GM10248 (cell line): ENCODE measurements at regions of chr18 and their contacts with region 1.

Region 1: GRCh38 chr18:12934454-12935071 is 13.2 kb upstream of the SEH1L start:
- DNase-seq: peak; percentile 73
- CTCF ChIP-seq: peak; percentile 87

Region 2: DNA sequence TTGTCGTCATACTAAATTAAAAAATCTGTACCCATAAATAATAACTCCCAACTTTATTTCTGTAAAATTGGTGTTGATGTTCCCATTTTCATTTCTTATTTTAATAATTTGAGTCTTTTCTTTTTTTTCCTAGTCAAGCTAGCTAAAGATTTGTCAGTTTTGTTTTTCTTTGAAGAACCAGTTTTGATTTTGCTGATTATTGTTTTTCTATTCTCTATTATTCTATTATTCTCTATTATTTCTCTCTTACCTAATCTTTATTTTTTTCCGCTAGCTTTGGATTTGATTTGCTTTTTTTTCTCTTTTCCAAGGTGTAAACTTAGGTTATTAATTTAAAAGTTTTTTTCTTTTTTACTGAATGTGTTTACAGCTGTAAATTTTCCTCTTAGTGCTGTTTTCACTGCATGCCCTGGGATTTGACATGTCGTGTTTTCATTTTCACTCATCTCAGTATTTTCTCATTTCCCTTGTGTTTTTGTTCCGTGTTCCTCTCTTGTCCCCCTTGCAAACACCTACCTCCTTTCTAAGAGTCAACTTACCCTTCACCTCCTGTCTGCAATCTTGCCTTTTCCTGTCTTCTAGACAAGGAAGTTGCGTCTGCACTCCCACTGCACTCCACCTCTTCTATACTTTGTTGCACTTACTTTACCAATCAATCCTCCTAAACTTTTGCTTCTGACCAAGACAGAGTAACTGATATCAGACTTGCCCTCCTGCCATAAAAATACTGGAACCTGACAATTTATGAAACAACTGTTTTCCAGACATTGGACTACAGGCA is 212.9 kb before region 1 on chr18:
- CTCF ChIA-PET with region 1: interaction called, 100 read pairs
- POLR2A ChIA-PET with region 1: no interaction called
- DNase-seq: no peak
- CTCF ChIP-seq: no peak

Region 3: DNA sequence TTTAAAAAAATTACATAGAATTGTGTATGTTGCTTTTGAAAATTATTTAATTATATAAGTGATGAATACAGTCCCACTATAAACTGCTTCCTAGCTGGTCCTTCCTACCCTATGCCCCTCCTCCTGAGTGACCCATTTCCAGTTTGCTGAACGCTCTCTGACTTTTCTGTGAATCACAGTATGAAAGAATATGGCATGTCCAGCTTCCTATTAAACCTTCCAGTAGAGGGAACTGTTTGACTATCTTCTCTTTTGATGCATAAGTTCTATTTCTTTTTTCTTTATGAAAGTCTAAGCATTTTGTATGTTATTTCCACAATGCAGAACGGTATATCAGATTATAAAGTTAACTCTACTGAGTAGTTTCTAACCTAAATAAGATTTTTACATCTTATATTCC is 190.5 kb before region 1 on chr18:
- CTCF ChIA-PET with region 1: interaction called, 37 read pairs
- POLR2A ChIA-PET with region 1: no interaction called
- DNase-seq: peak; percentile 68
- CTCF ChIP-seq: peak; percentile 58

Region 4: DNA sequence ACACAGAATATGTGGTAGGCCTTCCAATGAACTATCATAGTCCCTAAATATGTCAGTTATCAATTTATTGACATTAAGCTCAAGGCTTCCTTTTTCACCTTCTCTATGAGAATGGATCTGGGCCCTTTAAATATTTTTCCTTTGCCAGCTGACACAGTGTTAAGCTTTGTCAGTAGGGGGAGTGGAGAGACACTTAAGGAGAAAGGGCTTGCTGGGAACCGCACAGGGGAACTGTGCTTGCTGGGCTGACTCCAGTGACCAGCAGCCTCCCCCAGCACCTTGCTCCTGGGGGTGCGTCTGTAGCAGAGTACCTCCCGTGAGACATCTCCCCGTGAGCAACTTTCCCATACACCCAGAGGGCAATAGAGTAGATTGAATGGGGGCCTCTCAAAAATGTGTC is 44.1 kb before region 1 on chr18:
- CTCF ChIA-PET with region 1: interaction called, 10 read pairs
- POLR2A ChIA-PET with region 1: no interaction called
- DNase-seq: no peak
- CTCF ChIP-seq: no peak

Region 5: DNA sequence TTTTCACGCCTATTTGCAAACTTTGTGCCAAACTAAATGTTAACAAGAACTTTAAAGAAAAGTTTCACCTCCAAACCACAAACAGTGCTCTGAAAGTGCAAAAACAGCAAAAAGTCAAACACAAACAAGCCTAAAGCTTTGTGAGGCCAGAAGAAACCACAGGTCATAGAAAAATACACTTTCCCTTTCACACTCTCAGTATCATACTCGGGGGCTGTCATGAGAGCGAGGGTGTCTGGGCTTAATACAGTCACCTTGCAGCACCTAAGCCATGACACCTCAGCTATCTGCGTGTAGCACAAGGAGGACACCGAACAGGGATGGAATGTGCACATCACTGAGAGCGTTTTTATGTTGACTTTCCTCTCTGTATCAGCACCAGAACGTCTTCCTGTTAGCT is 13.4 kb before region 1 on chr18:
- CTCF ChIA-PET with region 1: interaction called, 49 read pairs
- POLR2A ChIA-PET with region 1: no interaction called
- DNase-seq: peak; percentile 54
- CTCF ChIP-seq: no peak